Naive thymus-derived CD4-positive, alpha-beta T cell (primary cell): ENCODE measurements at regions of chr7 and their contacts with region 1.

Region 1: GRCh38 chr7:56074371-56074791 is 10.3 kb downstream of the SUMF2 start:
- DNase-seq: peak; percentile 34 to 71 (median 52)
- ATAC-seq: peak; percentile 92
- H3K4me3 ChIP-seq: no peak overlapping the region
- H3K4me3 Mint-ChIP-seq: no peak overlapping the region
- H3K27ac ChIP-seq: no peak overlapping the region
- H3K27ac Mint-ChIP-seq: peak overlapping the region in 5 of 9 donors; percentile 41 to 89 (median 63)
- H3K4me1 ChIP-seq: no peaks in the 10 kb centered on the region
- H3K4me1 Mint-ChIP-seq: peaks cover 2 to 10% (median 6%) of the 10 kb centered on the region in 7 donors
- H3K27me3 ChIP-seq: no peaks in the 10 kb centered on the region
- H3K27me3 Mint-ChIP-seq: no peaks in the 10 kb centered on the region

Region 2: DNA sequence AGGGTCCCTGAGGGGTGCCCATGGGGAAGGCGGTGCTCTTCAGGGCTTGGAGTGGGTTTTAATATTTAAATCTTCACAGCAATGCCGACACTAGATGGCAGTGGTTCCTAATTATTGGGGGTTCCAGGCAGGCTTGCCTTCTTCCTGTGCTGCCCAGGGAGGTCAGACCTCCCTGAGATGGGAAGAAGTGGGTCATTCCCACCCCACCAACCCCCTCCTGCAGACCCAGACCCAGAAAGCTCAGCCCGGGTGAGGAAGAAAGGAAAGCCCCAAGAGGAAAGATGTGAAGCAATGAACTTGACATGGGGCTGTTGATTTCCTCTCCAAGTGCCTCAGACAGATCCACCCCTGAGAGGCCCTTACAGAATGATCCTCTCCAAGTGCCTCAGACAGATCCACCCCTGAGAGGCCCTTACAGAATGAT is 794.3 kb before region 1 on chr7:
- CTCF ChIA-PET with region 1: no interaction called
- POLR2A ChIA-PET with region 1: no interaction called
- intact Hi-C with region 1: loop called in 1 of 2 experiments (anchors 2 kb)
- DNase-seq: peak in 8 of 9 donors; percentile 15 to 59 (median 44)
- ATAC-seq: peak; percentile 73
- H3K4me3 ChIP-seq: no peak overlapping the region
- H3K4me3 Mint-ChIP-seq: no peak overlapping the region
- H3K27ac ChIP-seq: no peak overlapping the region
- H3K27ac Mint-ChIP-seq: peak overlapping the region in 1 of 9 donors; percentile 52
- H3K4me1 ChIP-seq: no peaks in the 10 kb centered on the region
- H3K4me1 Mint-ChIP-seq: peaks cover 0 to 2% (median 0%) of the 10 kb centered on the region in 7 donors
- H3K27me3 ChIP-seq: no peaks in the 10 kb centered on the region
- H3K27me3 Mint-ChIP-seq: peaks cover 5 to 12% (median 8%) of the 10 kb centered on the region in 5 donors

Region 3: GRCh38 chr7:55641273-55641691 is 433.1 kb before region 1 on chr7:
- CTCF ChIA-PET with region 1: interaction called, 10 read pairs
- POLR2A ChIA-PET with region 1: interaction called, 4 read pairs
- intact Hi-C with region 1: loop called (anchors 1 kb)
- DNase-seq: peak in 8 of 9 donors; percentile 23 to 66 (median 52)
- ATAC-seq: peak; percentile 81
- H3K4me3 ChIP-seq: no peak overlapping the region
- H3K4me3 Mint-ChIP-seq: peak overlapping the region in 1 of 10 donors; percentile 59
- H3K27ac ChIP-seq: no peak overlapping the region
- H3K27ac Mint-ChIP-seq: peak overlapping the region in 1 of 9 donors; percentile 72
- H3K4me1 ChIP-seq: peaks cover 6 to 7% of the 10 kb centered on the region in 2 donors
- H3K4me1 Mint-ChIP-seq: peaks cover 7 to 15% (median 12%) of the 10 kb centered on the region in 7 donors
- H3K27me3 ChIP-seq: peaks cover 0 to 3% of the 10 kb centered on the region in 2 donors
- H3K27me3 Mint-ChIP-seq: peaks cover 0 to 9% (median 5%) of the 10 kb centered on the region in 5 donors

Region 4: DNA sequence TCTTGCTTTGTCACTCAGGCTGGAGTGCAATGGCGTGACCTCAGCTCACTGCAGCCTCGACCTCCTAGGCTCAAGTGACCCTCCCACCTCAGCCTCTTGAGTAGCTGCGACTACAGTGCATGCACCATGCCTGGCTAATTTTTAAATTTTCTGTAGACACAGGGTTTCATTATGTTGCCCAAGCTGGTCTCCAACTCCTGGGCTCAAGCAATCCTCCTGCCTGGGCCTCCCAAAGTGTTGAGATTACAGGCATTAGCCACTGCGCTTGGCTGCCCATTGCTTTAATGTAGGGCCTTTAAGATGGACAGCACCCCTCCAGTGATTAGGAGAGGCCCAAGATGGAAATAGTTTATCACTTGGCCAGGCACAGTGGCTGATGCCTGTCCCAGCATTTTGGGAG is 70.6 kb before region 1 on chr7:
- CTCF ChIA-PET with region 1: interaction called, 44 read pairs
- POLR2A ChIA-PET with region 1: interaction called, 3 read pairs
- intact Hi-C with region 1: loop called in 1 of 2 experiments (anchors 1 kb)
- DNase-seq: no peak
- ATAC-seq: no peak
- H3K4me3 ChIP-seq: no peak overlapping the region
- H3K4me3 Mint-ChIP-seq: no peak overlapping the region
- H3K27ac ChIP-seq: no peak overlapping the region
- H3K27ac Mint-ChIP-seq: no peak overlapping the region
- H3K4me1 ChIP-seq: no peaks in the 10 kb centered on the region
- H3K4me1 Mint-ChIP-seq: peaks cover 0 to 17% (median 0%) of the 10 kb centered on the region in 7 donors
- H3K27me3 ChIP-seq: no peaks in the 10 kb centered on the region
- H3K27me3 Mint-ChIP-seq: no peaks in the 10 kb centered on the region

Region 5: GRCh38 chr7:56009695-56010094 is 64.7 kb before region 1 on chr7:
- CTCF ChIA-PET with region 1: interaction called, 44 read pairs
- POLR2A ChIA-PET with region 1: no interaction called
- intact Hi-C with region 1: loop called in 1 of 2 experiments (anchors 1 kb)
- DNase-seq: no peak
- ATAC-seq: no peak
- H3K4me3 ChIP-seq: no peak overlapping the region
- H3K4me3 Mint-ChIP-seq: no peak overlapping the region
- H3K27ac ChIP-seq: no peak overlapping the region
- H3K27ac Mint-ChIP-seq: no peak overlapping the region
- H3K4me1 ChIP-seq: no peaks in the 10 kb centered on the region
- H3K4me1 Mint-ChIP-seq: peaks cover 0 to 3% (median 0%) of the 10 kb centered on the region in 7 donors
- H3K27me3 ChIP-seq: no peaks in the 10 kb centered on the region
- H3K27me3 Mint-ChIP-seq: no peaks in the 10 kb centered on the region

Region 6: GRCh38 chr7:56033671-56034432 is 40.5 kb before region 1 on chr7:
- CTCF ChIA-PET with region 1: no interaction called
- POLR2A ChIA-PET with region 1: interaction called, 3 read pairs
- intact Hi-C with region 1: loop called (anchors 2 kb)
- DNase-seq: peak; percentile 51 to 81 (median 77)
- ATAC-seq: peak; percentile 98
- H3K4me3 ChIP-seq: peak overlapping the region; percentile 63
- H3K4me3 Mint-ChIP-seq: peak overlapping the region; percentile 78 to 96 (median 88)
- H3K27ac ChIP-seq: peak overlapping the region; percentile 70
- H3K27ac Mint-ChIP-seq: peak overlapping the region; percentile 9 to 90 (median 75)
- H3K4me1 ChIP-seq: no peaks in the 10 kb centered on the region
- H3K4me1 Mint-ChIP-seq: peaks cover 5 to 18% (median 15%) of the 10 kb centered on the region in 7 donors
- H3K27me3 ChIP-seq: no peaks in the 10 kb centered on the region
- H3K27me3 Mint-ChIP-seq: no peaks in the 10 kb centered on the region

Region 7: GRCh38 chr7:56063882-56064625 is 10.3 kb before region 1 on chr7 and contains the start of gene SUMF2:
- CTCF ChIA-PET with region 1: interaction called, 7 read pairs
- POLR2A ChIA-PET with region 1: interaction called, 4 read pairs
- intact Hi-C with region 1: loop called in 1 of 2 experiments (anchors 1 kb)
- DNase-seq: peak; percentile 86 to 96 (median 93)
- ATAC-seq: peak; percentile 96
- H3K4me3 ChIP-seq: peak within 1 kb of the TSS; percentile 98
- H3K4me3 Mint-ChIP-seq: peak within 1 kb of the TSS; percentile 83 to 95 (median 92)
- H3K27ac ChIP-seq: peak within 1 kb of the TSS; percentile 88
- H3K27ac Mint-ChIP-seq: peak within 1 kb of the TSS; percentile 93 to 98 (median 96)
- H3K4me1 ChIP-seq: peaks cover 7 to 8% of the 10 kb centered on the region in 2 donors
- H3K4me1 Mint-ChIP-seq: peaks cover 16 to 37% (median 22%) of the 10 kb centered on the region in 7 donors
- H3K27me3 ChIP-seq: no peaks in the 10 kb centered on the region
- H3K27me3 Mint-ChIP-seq: peaks cover 0 to 2% (median 0%) of the 10 kb centered on the region in 5 donors
- total RNA-seq, gene SUMF2: 120 to 176 (median 122) TPM